KBM-7 (cell line): ENCODE measurements at regions of chr17 and their contacts with region 1.

Region 1: DNA sequence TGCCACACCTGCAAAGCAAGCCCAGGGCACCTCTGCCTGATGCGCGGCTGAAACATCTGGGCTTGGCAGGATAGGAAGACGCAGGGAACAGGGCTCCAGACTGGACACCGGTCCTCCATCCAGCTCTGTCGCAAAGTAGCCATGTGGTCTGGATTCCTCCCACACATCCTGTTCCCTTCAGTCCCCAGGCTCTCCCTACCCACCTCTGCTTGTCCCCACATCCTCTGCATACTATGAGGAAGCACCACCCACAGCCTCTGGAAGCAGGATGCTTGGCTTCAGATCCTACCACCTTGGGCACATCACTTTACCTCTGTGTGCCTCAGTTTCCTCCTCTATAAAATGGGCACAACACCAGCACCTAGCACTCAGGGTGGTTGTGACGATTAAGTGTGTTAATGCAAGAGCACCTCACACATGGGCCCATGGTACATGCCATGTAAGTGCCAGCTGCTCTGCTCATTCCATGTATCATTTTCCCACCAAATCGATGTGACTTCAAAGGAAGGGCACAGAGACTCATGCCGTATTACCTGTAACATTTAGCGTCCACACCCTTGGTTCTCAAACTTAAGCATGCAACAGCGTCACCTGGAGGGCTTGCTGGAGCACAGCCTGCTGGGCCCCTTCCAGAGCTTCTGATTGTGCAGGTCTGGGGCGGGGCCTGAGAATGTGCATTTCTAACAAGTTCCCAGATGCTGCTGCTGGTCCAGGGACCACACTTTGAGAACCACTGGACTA is 138.6 kb upstream of the SDK2 start:
- DNase-seq: peak; percentile 1

Region 2: DNA sequence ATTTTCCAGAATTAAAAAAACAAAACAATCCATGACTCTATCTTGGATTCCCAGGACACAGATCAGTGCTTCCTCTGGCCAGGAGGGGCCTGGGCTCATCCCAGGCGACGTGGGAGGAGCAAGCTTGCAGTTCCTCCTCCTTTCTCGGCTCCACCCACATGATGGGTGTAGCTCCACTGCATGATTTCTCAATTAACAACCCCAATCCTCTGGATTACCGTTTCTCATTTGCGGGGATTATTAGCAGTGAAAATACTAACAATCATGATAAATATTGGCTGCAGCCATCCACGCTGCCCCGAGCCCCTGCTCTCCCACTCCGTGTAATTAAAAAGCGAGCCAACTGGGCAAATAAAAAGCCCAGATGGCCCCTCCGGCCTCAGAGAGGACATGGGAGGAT is 92.1 kb before region 1 on chr17:
- in situ Hi-C with region 1: no loop called
- DNase-seq: no peak

Region 3: DNA sequence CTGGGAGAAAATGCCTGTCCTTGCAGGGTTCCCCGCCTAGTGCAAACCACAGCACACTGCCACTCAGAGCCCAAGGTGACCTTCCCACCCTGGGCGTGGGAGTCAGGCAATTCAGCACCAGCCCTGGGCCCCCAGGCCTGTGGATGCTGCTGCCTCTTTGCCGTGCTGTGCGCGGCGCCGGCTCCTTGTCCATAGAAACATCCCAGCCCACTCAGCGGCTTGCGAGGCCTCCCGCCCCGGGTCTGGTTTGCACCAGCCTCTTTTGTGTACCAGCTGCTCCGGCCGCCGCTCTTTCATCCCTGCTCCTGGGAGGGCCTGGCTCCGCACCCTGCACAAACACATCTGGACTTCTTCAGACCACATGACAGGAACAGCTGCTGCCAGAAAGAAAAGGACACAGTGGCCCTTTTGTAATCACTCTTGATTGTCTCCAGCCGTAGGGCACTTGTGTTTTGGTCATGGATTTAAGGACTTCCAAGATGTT is 63.2 kb before region 1 on chr17:
- in situ Hi-C with region 1: loop called (anchors 10 kb)
- DNase-seq: no peak